ENCODE measurements at regions of chrX and their contacts with region 1.

Region 1: DNA sequence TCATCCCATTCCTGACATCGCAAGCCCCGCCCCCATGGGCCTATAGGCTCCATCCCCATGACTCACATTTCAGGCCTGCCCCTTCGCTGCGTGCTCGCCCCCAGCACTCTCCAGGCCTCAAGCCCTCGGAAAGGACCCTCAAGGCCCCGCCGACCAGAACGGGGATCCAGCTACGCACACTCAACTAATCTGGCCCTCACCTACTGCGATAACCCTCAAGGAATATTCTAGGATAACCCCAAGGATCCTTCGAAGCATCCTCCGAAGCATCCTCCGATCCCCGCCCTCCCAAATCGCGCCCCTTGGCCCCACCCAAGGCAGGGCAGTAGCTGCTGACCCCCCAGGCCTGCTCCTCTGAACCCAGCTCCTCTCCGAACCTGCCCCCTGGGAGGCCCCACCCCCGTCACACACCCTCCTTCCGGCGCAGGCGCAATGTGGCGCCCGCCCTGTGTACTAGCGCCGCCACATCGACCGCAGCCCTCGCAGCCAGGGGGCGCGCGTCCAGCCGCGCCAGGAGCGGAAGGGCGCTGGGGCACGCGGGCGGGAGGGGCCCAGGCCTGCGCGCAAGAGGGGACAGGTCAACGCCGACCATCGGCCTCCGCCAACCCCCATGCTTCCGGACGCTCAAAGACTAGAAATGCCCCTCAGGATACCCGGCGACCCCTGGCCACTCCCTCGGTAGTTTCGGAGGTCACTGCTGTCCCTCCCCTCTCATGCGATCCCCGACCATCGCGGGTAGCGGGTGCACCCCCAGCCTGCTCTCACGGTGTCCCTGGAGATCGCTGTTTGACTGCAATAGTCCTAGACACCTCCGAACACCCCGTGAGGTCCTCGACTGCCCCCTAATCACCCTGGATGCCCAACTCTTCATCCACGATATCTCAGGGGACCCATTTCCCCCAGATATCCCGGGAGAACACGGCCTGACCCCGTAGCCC is 6.4 kb upstream of the MAGIX start:
- H3K4me3 ChIP-seq: peak overlapping the region; percentile 42
- H3K27ac ChIP-seq: peak overlapping the region; percentile 79
- H3K4me1 ChIP-seq: no peaks in the 10 kb centered on the region
- CTCF ChIP-seq: peak; percentile 88

Region 2: DNA sequence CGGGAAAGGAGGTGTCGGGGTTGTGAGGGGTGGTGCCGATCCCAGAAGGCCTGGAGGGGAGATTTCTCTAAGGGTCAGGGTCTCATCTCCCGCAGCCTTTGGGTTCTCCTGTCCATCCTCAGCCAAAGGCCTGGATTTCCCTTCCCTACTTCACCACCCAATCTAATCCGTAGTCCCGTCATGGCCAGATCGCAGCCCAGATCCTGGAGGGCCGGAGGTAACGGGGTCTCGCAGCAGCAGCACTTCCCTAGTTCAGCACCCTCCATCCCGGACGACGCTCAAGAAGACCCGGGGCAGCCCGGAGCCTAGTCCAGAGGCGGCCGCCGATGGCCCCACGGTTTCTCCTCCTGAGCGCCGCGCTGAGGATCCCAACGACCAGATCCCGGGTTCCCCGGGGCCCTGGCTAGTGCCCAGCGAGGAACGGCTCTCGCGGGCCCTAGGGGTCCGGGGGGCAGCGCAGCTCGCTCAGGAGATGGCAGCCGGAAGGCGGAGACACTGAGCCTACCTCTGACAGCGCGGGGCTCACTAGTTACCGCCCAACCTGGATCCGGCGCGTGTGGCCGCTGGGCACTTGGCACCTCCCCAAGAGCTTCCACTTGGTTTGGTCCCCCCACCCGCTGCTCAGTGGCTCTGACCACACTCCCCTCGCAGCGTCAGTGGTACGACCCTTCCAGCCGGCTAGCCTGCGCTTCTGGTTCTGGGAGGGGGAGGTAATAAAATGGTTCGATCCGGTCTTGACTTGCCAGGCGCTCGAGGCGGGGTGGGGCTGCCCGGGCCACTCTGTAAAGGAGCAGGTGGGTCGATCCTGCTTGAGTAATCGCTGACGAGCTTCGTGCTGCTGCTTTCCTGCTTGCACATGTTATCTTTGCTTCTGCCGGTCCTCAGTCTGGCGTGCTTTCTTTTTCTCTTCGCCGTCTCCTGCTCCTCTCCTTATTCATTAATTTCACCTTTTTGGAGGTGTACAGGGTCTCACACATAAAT is 10.0 kb after region 1 on chrX:
- CTCF ChIA-PET with region 1: interaction called, 14 read pairs
- POLR2A ChIA-PET with region 1: interaction called, 10 read pairs
- H3K4me3 ChIP-seq: no peak overlapping the region
- H3K27ac ChIP-seq: peak overlapping the region; percentile 77
- H3K4me1 ChIP-seq: peaks cover 7% of the 10 kb centered on the region
- CTCF ChIP-seq: peak; percentile 81

Region 3: DNA sequence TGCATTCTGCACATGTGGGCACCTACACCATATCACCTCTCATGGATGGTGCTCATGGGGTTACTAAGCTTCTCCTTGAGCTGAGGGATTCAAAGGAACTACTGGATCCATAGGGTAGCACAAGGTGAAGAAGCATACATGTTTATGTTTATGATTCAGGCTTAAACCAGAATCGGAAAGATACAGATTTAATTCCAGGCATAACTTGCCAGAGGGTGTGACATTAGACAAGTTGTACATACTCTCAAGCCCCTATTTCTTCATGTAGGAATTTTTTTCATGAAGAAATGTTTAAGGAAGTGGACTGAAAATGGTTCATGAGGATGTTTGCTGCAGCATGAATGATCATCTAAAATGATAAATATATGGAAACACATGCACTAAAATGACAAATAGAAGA is 669.9 kb after region 1 on chrX:
- CTCF ChIA-PET with region 1: no interaction called
- POLR2A ChIA-PET with region 1: no interaction called
- H3K4me3 ChIP-seq: no peak overlapping the region
- H3K27ac ChIP-seq: no peak overlapping the region
- H3K4me1 ChIP-seq: no peaks in the 10 kb centered on the region
- CTCF ChIP-seq: no peak

Measured in HEK293 (cell line).